ENCODE measurements at regions of chr11 and their contacts with region 1.

Region 1: GRCh38 chr11:113730887-113731726 is 25.0 kb upstream of the TMPRSS5 start:
- DNase-seq: peak; percentile 29 to 75 (median 40)
- H3K4me3 ChIP-seq: no peak overlapping the region
- H3K27ac ChIP-seq: peak overlapping the region in 1 of 5 donors; percentile 13
- H3K4me1 ChIP-seq: peaks cover 4 to 13% of the 10 kb centered on the region in 2 donors
- H3K27me3 ChIP-seq: no peaks in the 10 kb centered on the region
- CTCF ChIP-seq: peak in 4 of 6 experiments; percentile 50 to 66 (median 58)
- POLR2A ChIP-seq: no peak

Region 2: GRCh38 chr11:113289431-113290187 is 441.5 kb before region 1 on chr11:
- intact Hi-C with region 1: no loop called
- DNase-seq: peak; percentile 48 to 84 (median 72)
- H3K4me3 ChIP-seq: no peak overlapping the region
- H3K27ac ChIP-seq: no peak overlapping the region
- H3K4me1 ChIP-seq: no peaks in the 10 kb centered on the region
- H3K27me3 ChIP-seq: no peaks in the 10 kb centered on the region
- CTCF ChIP-seq: peak; percentile 87 to 97 (median 94)
- POLR2A ChIP-seq: no peak

Region 3: DNA sequence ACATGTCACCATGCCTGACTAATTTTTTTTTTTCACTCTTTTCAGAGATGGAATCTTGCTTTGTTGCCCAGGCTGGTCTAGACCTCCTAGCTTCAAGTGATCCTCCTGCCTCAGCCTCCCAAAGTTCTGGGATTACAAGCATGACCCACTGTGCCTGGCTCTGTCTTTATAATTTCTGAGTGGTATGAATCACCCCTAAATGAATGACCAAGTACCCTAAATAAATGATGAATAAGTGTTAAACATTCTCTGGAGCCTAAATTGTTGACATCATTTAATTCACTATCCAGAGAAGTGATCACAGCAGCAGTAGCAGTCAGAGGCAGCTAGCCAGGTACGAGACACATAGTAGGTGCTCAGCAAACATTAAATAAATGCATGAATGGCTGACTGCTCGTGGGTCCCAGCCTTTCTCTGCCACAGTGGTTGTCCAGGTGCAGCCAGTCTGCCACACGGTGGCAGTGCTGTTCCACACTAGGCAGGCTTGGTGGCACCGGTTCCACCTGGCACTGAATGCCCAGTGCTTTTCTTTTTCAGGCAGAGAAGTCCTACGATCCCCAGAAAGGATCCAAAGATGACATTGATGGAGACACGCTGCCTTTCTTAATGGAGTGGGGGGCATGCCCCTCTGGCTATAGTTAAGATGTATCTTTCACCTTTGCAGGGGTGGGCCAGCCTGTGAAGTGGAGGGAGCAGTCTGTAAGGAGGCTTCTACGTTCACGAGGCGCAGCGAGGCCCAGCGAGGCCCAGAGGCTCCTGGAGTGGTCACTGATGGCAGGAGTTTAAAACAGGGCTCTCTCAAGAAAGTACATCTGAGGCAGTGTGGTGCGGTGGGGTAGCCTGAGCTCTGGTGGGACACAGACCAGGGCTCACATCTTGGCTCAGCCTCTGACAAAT is 425.4 kb before region 1 on chr11:
- intact Hi-C with region 1: loop called (anchors 5 to 10 kb)
- DNase-seq: peak; percentile 77 to 93 (median 83)
- H3K4me3 ChIP-seq: no peak overlapping the region
- H3K27ac ChIP-seq: no peak overlapping the region
- H3K4me1 ChIP-seq: no peaks in the 10 kb centered on the region
- H3K27me3 ChIP-seq: no peaks in the 10 kb centered on the region
- CTCF ChIP-seq: peak; percentile 78 to 97 (median 96)
- POLR2A ChIP-seq: no peak

Region 4: DNA sequence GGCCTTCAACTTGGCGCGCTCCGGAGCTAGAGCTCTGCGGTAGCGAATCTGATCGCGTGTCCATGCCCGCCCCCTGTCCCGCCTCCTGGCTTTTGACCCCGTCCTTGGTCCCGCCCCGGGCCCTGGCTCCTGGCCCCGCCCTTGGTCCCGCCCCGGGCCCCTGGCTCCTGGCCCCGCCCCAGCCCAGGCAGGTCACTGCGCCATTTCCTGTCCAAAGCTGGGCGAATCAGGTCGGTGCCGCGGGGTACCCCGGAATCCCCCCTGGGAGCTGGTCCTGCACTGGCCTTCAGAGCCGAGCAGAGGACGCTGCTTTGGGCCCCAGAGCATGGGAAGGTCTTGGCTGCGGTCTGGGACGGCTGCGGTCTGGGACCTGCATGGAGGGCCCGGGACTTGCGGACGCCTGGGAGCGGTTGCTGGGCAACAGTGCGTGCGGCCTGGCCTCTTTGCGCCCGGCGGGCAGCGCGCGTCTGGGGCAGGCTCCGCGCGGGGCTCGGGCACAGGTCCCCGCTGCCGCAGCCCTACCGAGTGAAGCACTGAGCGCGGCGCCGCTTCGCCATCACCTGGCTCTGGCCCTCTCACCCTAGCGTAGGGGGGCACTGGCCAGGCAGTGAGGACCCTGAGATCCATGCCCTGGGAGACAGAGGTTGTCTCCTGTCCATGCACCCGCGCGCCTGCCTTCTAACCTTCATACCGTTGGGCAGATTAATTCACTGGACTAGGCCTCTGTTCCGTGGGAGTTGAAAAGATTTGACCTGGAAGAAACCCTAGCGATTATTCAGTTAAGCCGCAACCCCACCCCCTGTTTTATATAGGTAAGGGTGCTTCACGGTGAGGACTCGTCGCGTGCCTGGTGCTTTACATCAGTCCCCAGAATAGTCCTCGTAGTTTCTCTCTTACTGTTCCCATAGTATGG is 416.5 kb before region 1 on chr11 and contains the start of gene TTC12:
- intact Hi-C with region 1: loop called (anchors 5 to 10 kb)
- DNase-seq: peak; percentile 95 to 98 (median 96)
- H3K4me3 ChIP-seq: peak within 1 kb of the TSS; percentile 35 to 81 (median 64)
- H3K27ac ChIP-seq: peak within 1 kb of the TSS; percentile 33 to 83 (median 68)
- H3K4me1 ChIP-seq: peaks cover 0 to 16% of the 10 kb centered on the region in 2 donors
- H3K27me3 ChIP-seq: no peaks in the 10 kb centered on the region
- CTCF ChIP-seq: no peak
- POLR2A ChIP-seq: peak in 1 of 2 donors; percentile 28
- total RNA-seq, gene TTC12: 5.6 to 26.9 (median 17.0) TPM

Region 5: GRCh38 chr11:113849713-113850112 is 118.6 kb after region 1 on chr11:
- intact Hi-C with region 1: no loop called
- DNase-seq: no peak
- H3K4me3 ChIP-seq: no peak overlapping the region
- H3K27ac ChIP-seq: no peak overlapping the region
- H3K4me1 ChIP-seq: no peaks in the 10 kb centered on the region
- H3K27me3 ChIP-seq: no peaks in the 10 kb centered on the region
- CTCF ChIP-seq: no peak
- POLR2A ChIP-seq: no peak

Region 6: GRCh38 chr11:114121804-114122504 is 390.8 kb after region 1 on chr11:
- intact Hi-C with region 1: no loop called
- DNase-seq: peak in 1 of 7 donors; percentile 54
- H3K4me3 ChIP-seq: no peak overlapping the region
- H3K27ac ChIP-seq: peak overlapping the region in 3 of 5 donors; percentile 29 to 79 (median 58)
- H3K4me1 ChIP-seq: peaks cover 17 to 87% of the 10 kb centered on the region in 2 donors
- H3K27me3 ChIP-seq: no peaks in the 10 kb centered on the region
- CTCF ChIP-seq: no peak
- POLR2A ChIP-seq: no peak

Measured in adrenal gland (tissue), 19 donors.